OCI-LY7 (cell line): ENCODE measurements at regions of chr9 and their contacts with region 1.

Region 1: GRCh38 chr9:34989003-34989945 is at the start of gene DNAJB5:
- DNase-seq: peak; percentile 98
- H3K4me3 ChIP-seq: peak within 1 kb of the TSS; percentile 79
- H3K27ac ChIP-seq: peak within 1 kb of the TSS; percentile 13
- H3K4me1 ChIP-seq: peaks cover 58% of the 10 kb centered on the region
- CTCF ChIP-seq: no peak
- total RNA-seq, gene DNAJB5: 4.6 and 5.1 TPM in 2 replicates

Region 2: DNA sequence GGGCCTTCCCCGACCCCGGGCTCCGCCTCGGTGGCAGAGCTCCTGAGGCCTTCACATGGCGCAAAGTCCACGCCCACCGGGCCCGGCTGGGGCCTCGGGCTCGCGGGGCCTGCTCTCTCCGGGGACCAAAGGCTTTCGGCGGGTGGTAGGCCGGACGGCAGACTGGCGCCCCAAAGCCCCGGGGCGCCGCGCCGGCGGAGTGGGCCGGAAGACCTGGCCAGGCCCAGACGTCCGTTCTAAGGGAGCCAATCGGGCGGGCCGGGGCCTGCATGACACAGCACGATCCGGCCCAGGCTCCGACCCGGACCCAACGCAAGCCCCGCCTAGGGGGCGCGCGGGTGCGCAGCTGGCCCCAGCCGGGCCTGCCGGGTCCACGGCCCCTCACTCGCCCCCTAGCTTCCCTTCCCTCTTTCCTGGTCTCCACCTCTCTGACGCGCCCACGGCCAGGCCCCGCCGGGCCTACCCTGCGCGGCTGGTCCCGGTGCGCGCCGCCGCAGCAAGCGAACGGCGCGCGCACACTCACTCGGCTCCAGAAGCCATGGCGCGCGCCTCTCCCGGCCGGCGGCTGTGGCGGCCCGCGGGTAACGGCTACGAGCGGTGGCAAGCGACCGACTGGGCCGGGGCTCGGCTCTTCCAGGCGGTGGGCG is 82.7 kb after region 1 on chr9:
- CTCF ChIA-PET with region 1: no interaction called
- POLR2A ChIA-PET with region 1: interaction called, 3 read pairs
- intact Hi-C with region 1: loop called (anchors 1 kb)
- DNase-seq: peak; percentile 87
- H3K4me3 ChIP-seq: peak overlapping the region; percentile 92
- H3K27ac ChIP-seq: peak overlapping the region; percentile 92
- H3K4me1 ChIP-seq: peaks cover 33% of the 10 kb centered on the region
- CTCF ChIP-seq: peak; percentile 64

Region 3: DNA sequence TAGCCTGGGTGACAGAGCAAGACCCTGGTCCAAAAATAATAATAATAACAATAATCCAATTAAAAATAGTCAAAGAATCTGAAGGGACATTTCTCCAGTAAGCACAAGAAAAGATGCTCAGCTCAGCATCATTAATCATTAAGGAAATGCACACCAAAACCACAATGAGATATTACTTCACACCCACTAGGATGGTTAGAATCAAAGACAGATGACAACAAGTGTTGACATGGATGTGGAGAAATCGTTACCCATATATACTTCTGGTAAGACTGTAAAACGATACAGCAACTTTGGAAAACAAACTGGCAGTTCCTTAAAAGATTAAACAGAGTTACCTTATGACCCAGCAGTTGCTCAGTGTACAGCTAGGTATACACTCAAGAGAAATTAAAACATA is 95.8 kb after region 1 on chr9:
- CTCF ChIA-PET with region 1: no interaction called
- POLR2A ChIA-PET with region 1: no interaction called
- intact Hi-C with region 1: no loop called
- DNase-seq: no peak
- H3K4me3 ChIP-seq: no peak overlapping the region
- H3K27ac ChIP-seq: no peak overlapping the region
- H3K4me1 ChIP-seq: peaks cover 11% of the 10 kb centered on the region
- CTCF ChIP-seq: no peak

Region 4: GRCh38 chr9:35102926-35103659 is 113.8 kb after region 1 on chr9 and contains the start of gene STOML2:
- CTCF ChIA-PET with region 1: interaction called, 3 read pairs
- POLR2A ChIA-PET with region 1: no interaction called
- intact Hi-C with region 1: loop called (anchors 2 kb)
- DNase-seq: peak; percentile 95
- H3K4me3 ChIP-seq: peak within 1 kb of the TSS; percentile 95
- H3K27ac ChIP-seq: peak within 1 kb of the TSS; percentile 55
- H3K4me1 ChIP-seq: peaks cover 18% of the 10 kb centered on the region
- CTCF ChIP-seq: peak; percentile 31; the same call in 1 of the 2 replicates
- total RNA-seq, gene STOML2: 152 and 158 TPM in 2 replicates

Region 5: GRCh38 chr9:35161713-35162604 is 172.7 kb after region 1 on chr9 and contains the start of gene UNC13B:
- CTCF ChIA-PET with region 1: no interaction called
- POLR2A ChIA-PET with region 1: interaction called, 3 read pairs
- intact Hi-C with region 1: loop called (anchors 5 kb)
- DNase-seq: peak; percentile 93
- H3K4me3 ChIP-seq: peak within 1 kb of the TSS; percentile 79
- H3K27ac ChIP-seq: no peak within 1 kb of the TSS
- H3K4me1 ChIP-seq: peaks cover 34% of the 10 kb centered on the region
- CTCF ChIP-seq: no peak
- total RNA-seq, gene UNC13B: 1.7 and 4.8 TPM in 2 replicates